ENCODE measurements at regions of chr11 and their contacts with region 1.

Region 1: GRCh38 chr11:132028380-132029240 is 658.2 kb downstream of the NTM start:
- DNase-seq: peak; percentile 25
- CTCF ChIP-seq: peak; percentile 60

Region 2: DNA sequence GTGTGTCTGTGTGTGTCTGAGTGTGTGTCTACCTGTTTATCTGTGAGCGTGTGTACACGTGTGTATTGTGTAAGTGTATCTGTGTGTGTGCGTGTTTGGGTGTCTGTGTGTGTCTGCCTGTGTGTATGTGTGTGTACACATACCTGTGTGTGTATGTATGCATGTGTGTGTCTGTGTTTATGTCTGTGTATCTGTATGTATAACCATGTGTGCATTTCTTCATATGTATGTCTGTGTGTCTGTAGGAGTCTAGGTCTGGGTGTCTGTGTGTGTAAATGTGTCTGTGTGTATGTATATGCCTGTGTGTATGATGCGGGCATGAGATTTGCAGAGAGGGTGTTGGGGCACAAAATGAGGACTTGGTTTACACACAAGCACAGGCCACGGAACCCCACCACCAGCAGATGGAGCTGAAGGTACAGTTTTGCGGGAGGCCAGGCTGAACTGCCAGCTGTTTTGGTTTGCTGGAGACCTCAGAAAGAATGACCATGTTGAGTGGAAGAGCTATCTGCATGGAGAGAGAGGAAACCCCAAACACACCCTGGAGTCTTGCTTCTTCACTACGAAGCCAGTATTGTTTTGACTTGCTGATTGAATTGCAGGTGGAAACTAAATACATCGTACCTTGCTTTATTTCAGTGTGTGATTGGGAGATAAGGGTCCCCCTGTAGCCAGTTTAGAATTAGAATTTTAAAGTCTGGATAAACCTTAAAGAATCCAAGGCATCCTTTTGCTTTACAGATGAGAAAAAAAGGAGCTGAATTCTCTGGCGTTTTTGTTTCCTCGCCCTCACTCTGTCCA is 161.0 kb before region 1 on chr11:
- in situ Hi-C with region 1: loop called (anchors 25 kb)
- DNase-seq: peak; percentile 74
- CTCF ChIP-seq: peak; percentile 82

Region 3: DNA sequence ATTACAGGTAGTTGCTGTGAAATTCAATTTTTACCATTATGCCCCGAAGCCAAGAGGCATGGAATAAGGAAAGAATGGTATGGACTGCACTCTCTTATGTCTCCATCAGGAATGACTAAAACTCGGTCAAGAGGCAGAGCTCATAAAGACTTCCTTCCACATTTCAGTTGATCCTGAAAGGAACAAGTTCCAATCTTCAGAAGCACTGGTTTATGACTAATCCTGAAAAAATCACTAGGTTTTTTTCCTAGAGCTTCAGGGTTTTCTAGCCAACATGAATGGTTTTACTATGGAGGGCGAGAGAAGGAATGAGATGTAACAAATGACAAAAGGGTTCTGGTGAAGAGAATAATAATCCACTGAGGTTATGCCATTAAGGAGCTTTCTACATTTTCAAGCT is 174.0 kb after region 1 on chr11:
- in situ Hi-C with region 1: no loop called
- DNase-seq: no peak
- CTCF ChIP-seq: no peak

Measured in GM13977 (cell line).